ENCODE measurements at regions of chr3 and their contacts with region 1.

Region 1: DNA sequence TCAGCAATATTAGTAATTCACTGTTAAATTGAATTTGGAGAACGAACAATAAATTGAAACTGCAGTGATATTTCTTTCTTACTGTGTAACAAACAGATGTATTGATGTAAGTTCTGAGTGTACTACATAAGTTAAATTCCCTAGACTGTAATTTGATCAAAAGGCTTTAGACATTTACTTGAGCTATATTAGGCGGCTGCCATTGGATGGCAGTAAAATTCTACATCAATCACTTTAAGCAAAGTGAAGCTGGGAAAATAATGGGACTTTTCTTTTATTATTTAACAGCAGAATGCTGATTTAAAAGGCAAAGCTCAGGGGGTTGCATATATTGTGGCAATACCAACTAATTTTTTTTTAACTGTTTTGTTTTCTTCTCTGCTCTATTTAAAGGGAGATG is 212.6 kb upstream of the PLSCR5 start:
- DNase-seq: peak; percentile 26
- ATAC-seq: peak; percentile 76
- H3K4me3 ChIP-seq: no peak overlapping the region
- H3K27ac ChIP-seq: no peak overlapping the region
- H3K4me1 ChIP-seq: no peaks in the 10 kb centered on the region
- H3K27me3 ChIP-seq: no peaks in the 10 kb centered on the region
- CTCF ChIP-seq: peak; percentile 1 to 65 (median 53); a peak in 3 of 6 replicates
- POLR2A ChIP-seq: no peak
- RAD21 ChIP-seq: peak; percentile 71

Region 2: GRCh38 chr3:146968204-146968651 is 150.5 kb after region 1 on chr3:
- CTCF ChIA-PET with region 1: no interaction called
- POLR2A ChIA-PET with region 1: no interaction called
- RAD21 ChIA-PET with region 1: no interaction called
- intact Hi-C with region 1: no loop called
- DNase-seq: peak; percentile 57
- ATAC-seq: peak; percentile 86
- H3K4me3 ChIP-seq: peak overlapping the region in 1 of 2 experiments; percentile 14; a peak in 3 of 4 replicates
- H3K27ac ChIP-seq: peak overlapping the region; percentile 58; the same call in 1 of the 2 replicates
- H3K4me1 ChIP-seq: peaks cover 7 to 29% of the 10 kb centered on the region in 2 experiments; a peak in 3 of 4 replicates
- H3K27me3 ChIP-seq: no peaks in the 10 kb centered on the region
- CTCF ChIP-seq: no peak
- POLR2A ChIP-seq: no peak
- RAD21 ChIP-seq: no peak; the same call in 1 of the 2 replicates

Region 3: DNA sequence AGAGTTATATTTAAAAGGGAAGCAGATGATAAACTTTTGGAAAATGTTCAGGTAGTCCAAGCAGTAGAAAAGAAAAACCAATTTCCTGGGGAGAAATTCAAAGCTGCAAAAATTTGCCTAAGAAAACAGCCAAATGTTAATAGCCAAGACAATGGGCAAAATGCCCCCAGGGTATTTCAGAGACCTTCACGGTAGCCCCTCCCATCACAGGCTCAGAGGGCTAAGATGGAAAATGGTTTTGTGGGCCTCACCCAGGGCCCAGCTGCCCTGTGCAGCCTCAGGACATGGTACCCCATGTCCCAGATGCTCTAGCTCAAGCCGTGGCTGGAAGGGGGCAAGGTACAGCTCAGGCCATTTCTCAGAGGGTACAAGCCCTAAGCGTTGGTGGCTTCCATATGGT is 197.6 kb after region 1 on chr3:
- CTCF ChIA-PET with region 1: no interaction called
- POLR2A ChIA-PET with region 1: no interaction called
- RAD21 ChIA-PET with region 1: no interaction called
- intact Hi-C with region 1: no loop called
- DNase-seq: no peak
- ATAC-seq: no peak
- H3K4me3 ChIP-seq: no peak overlapping the region
- H3K27ac ChIP-seq: no peak overlapping the region
- H3K4me1 ChIP-seq: no peaks in the 10 kb centered on the region
- H3K27me3 ChIP-seq: no peaks in the 10 kb centered on the region
- CTCF ChIP-seq: no peak
- POLR2A ChIP-seq: no peak
- RAD21 ChIP-seq: no peak

Region 4: DNA sequence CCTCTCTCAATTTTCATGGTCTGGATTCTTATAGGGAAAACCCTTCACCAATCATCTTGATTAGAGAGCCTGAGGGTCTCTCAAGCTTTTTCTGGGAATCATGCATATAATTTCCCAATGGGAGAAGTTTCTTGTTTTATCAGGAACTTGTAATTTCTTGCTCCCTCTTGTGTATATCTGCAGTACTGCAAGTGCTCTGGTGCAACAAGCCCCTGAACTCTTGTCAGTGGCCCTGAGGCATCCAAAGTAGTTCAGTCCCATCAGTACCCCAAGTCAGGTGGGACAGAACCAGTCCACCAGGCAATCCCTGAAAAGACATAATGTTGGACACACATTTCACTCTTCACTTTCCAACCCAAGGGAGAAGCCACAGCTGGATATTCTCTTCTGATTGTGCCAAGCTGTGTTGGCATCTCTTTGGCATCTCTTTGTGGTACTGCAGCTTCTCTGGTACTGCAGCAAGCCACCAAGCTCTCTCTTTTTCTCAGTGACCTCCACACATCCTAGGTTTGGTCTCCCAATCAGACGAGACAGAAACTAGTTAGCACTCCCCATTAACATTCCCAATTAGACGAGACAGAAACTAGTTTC is 374.2 kb after region 1 on chr3:
- CTCF ChIA-PET with region 1: interaction called, 15 read pairs
- POLR2A ChIA-PET with region 1: no interaction called
- RAD21 ChIA-PET with region 1: interaction called in 1 of 2 experiments, 4 read pairs
- intact Hi-C with region 1: loop called (anchors 2 kb)
- DNase-seq: peak; percentile 68
- ATAC-seq: peak; percentile 60; the same call in 1 of the 2 replicates
- H3K4me3 ChIP-seq: no peak overlapping the region
- H3K27ac ChIP-seq: no peak overlapping the region
- H3K4me1 ChIP-seq: no peaks in the 10 kb centered on the region
- H3K27me3 ChIP-seq: no peaks in the 10 kb centered on the region
- CTCF ChIP-seq: peak; percentile 42 to 86 (median 82); a peak in 5 of 6 replicates
- POLR2A ChIP-seq: no peak
- RAD21 ChIP-seq: peak; percentile 67

Region 5: DNA sequence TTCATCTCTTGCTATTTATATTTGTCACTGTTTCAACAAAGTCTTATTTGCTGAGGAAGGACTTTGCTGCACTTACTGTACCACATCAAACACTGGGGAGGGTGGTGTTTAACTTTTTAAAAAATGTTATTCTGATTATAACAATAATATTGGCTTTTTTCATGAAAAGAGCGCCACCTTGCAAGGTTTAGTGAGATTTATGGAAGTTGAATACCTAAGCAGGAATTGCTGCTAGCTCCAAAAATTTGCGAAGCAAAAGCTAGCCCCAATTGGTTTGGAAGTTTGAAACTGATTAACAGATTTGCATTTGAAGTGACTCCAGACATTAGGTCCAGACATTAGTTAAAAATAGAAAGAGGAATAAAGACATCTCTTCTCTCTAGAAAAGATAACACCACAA is 598.1 kb after region 1 on chr3:
- CTCF ChIA-PET with region 1: interaction called, 10 read pairs
- POLR2A ChIA-PET with region 1: no interaction called
- RAD21 ChIA-PET with region 1: no interaction called
- intact Hi-C with region 1: no loop called
- DNase-seq: no peak
- ATAC-seq: no peak
- H3K4me3 ChIP-seq: no peak overlapping the region
- H3K27ac ChIP-seq: no peak overlapping the region
- H3K4me1 ChIP-seq: no peaks in the 10 kb centered on the region
- H3K27me3 ChIP-seq: no peaks in the 10 kb centered on the region
- CTCF ChIP-seq: peak; percentile 14 to 41 (median 34); a peak in 3 of 6 replicates
- POLR2A ChIP-seq: no peak
- RAD21 ChIP-seq: peak; percentile 47; the same call in 1 of the 2 replicates

Region 6: GRCh38 chr3:148366743-148367410 is 1549.2 kb after region 1 on chr3:
- CTCF ChIA-PET with region 1: interaction called, 6 read pairs
- POLR2A ChIA-PET with region 1: no interaction called
- RAD21 ChIA-PET with region 1: no interaction called
- intact Hi-C with region 1: loop called (anchors 10 kb)
- DNase-seq: no peak
- ATAC-seq: peak; percentile 72
- H3K4me3 ChIP-seq: no peak overlapping the region
- H3K27ac ChIP-seq: no peak overlapping the region
- H3K4me1 ChIP-seq: no peaks in the 10 kb centered on the region
- H3K27me3 ChIP-seq: no peaks in the 10 kb centered on the region
- CTCF ChIP-seq: peak; percentile 17 to 42 (median 35); a peak in 4 of 6 replicates
- POLR2A ChIP-seq: no peak
- RAD21 ChIP-seq: peak; percentile 66